K562 (cell line): ENCODE measurements at regions of chr1 and their contacts with region 1.

Region 1: DNA sequence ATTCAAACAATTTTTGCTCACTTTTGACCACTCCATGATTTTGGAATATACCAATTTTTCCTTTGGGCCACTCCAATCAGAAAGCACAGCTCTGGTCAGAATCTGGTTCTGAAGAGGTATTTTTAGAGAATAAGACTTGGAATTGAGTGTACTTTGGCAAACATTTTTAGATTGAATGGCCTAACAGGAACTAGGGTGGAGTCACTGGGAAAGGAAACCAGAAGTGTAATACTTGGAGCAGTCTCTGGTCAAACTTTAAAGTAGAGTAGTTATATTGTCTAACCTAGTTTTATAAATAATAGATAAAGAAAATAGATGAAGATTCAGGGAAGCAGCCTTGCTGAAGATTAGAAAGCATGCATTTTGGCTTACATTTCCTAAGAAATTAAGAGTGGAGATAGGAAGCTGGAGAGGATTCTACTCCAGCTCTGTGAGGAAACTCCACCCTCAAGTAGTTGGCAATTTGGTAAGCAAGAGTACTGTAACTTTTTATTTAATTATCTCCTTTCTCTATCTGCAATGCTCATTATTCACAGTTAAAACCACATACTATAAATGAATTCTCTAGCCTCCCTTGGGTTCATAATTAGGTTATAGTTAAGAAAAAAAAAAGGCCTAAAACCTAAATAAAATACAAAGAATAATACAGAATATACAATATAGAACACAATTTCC is 15.8 kb downstream of the STIL start:
- DNase-seq: no peak
- ATAC-seq: no peak
- H3K4me3 ChIP-seq: no peak overlapping the region
- H3K27ac ChIP-seq: no peak overlapping the region
- H3K4me1 ChIP-seq: no peaks in the 10 kb centered on the region
- H3K27me3 ChIP-seq: no peaks in the 10 kb centered on the region
- CTCF ChIP-seq: no peak
- EP300 ChIP-seq: no peak
- POLR2A ChIP-seq: no peak
- RAD21 ChIP-seq: no peak

Region 2: DNA sequence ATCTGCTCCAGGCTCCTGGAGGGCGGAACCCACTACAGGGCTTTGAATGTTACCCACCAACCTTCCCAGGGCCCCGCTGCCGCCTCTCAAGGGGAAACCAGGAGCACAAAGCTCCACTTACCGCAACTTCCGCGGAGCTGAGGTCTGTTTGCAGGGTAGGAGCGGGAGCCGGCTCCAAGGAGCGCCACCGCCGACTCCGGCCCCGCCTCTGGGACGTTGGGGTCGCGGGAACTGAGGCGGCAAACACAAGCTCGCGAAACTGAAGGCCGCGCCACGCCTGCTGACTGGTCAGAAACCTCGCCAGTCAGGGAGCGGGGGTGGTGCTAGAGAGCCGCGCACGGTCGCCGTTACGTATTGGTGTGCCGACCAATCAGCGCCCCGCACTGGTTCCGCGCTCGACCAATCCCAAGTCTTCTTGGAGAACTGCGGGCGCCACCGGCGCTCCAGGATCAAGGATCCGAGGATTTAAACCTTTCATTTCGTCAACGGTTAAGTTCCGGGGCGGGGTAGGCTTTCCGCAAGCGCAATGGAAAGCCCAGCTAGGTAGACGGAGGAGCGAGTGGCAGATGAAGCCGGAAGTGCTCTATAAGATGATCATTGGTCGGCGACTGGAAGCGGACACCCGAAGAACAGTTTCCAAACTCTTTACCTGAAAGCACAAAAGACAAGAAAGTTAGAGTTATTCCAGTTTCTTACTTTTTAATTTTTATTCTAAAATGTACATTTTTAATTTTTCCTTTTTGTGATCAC is 15.9 kb after region 1 on chr1 and contains the start of gene STIL:
- CTCF ChIA-PET with region 1: no interaction called
- POLR2A ChIA-PET with region 1: interaction called, 14 read pairs
- in situ Hi-C with region 1: no loop called
- intact Hi-C with region 1: no loop called
- DNase-seq: peak; percentile 100
- ATAC-seq: peak; percentile 96
- H3K4me3 ChIP-seq: peak within 1 kb of the TSS; percentile 71
- H3K27ac ChIP-seq: peak within 1 kb of the TSS; percentile 94
- H3K4me1 ChIP-seq: peaks cover 5 to 14% of the 10 kb centered on the region in 2 experiments; a peak in 4 of 5 replicates
- H3K27me3 ChIP-seq: no peaks in the 10 kb centered on the region
- CTCF ChIP-seq: peak in 1 of 3 experiments; percentile 15; a peak in 1 of 6 replicates
- EP300 ChIP-seq: peak; percentile 50; the same call in 1 of the 2 replicates
- POLR2A ChIP-seq: peak; percentile 97
- RAD21 ChIP-seq: no peak
- polyA plus RNA-seq, gene STIL: 10.5 to 17.5 TPM